Common myeloid progenitor, CD34-positive (primary cell): ENCODE measurements at regions of chr11 and their contacts with region 1.

Region 1: GRCh38 chr11:58629857-58630256 is 7.4 kb downstream of the CNTF start:
- DNase-seq: peak; percentile 65 to 82 (median 82)
- H3K4me3 ChIP-seq: no peak overlapping the region
- H3K27ac ChIP-seq: no peak overlapping the region
- H3K4me1 ChIP-seq: peaks cover 0 to 7% (median 1%) of the 10 kb centered on the region in 4 experiments
- H3K27me3 ChIP-seq: no peaks in the 10 kb centered on the region

Region 2: GRCh38 chr11:58471892-58472291 is 158.0 kb before region 1 on chr11:
- CTCF ChIA-PET with region 1: no interaction called
- POLR2A ChIA-PET with region 1: no interaction called
- DNase-seq: peak in 2 of 3 donors; percentile 8 to 13
- H3K4me3 ChIP-seq: no peak overlapping the region
- H3K27ac ChIP-seq: no peak overlapping the region
- H3K4me1 ChIP-seq: no peaks in the 10 kb centered on the region
- H3K27me3 ChIP-seq: no peaks in the 10 kb centered on the region

Region 3: GRCh38 chr11:58567889-58568512 is 61.9 kb before region 1 on chr11:
- CTCF ChIA-PET with region 1: interaction called, 45 read pairs
- POLR2A ChIA-PET with region 1: no interaction called
- DNase-seq: peak; percentile 79 to 91 (median 87)
- H3K4me3 ChIP-seq: no peak overlapping the region
- H3K27ac ChIP-seq: no peak overlapping the region
- H3K4me1 ChIP-seq: peaks cover 8 to 46% (median 28%) of the 10 kb centered on the region in 4 experiments
- H3K27me3 ChIP-seq: no peaks in the 10 kb centered on the region

Region 4: DNA sequence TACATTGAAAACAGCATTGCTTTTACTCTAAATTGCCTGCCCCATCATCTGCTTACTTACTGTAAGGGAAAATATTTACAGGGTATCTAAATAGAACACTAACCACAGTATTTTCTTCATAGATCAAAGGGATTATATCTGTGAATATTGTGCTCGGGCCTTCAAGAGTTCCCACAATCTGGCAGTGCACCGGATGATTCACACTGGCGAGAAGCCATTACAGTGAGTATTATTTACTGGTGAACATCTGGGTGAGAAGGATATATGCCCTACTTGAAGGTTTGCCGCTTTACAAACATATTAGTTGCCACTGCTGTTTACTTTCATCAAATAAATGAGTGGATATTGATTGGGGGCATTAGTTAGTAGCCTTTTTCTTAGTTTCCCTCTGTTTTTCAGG is 13.3 kb before region 1 on chr11:
- CTCF ChIA-PET with region 1: interaction called, 27 read pairs
- POLR2A ChIA-PET with region 1: no interaction called
- DNase-seq: no peak
- H3K4me3 ChIP-seq: no peak overlapping the region
- H3K27ac ChIP-seq: no peak overlapping the region
- H3K4me1 ChIP-seq: no peaks in the 10 kb centered on the region
- H3K27me3 ChIP-seq: no peaks in the 10 kb centered on the region

Region 5: GRCh38 chr11:58647141-58647699 is 17.4 kb after region 1 on chr11:
- CTCF ChIA-PET with region 1: interaction called, 12 read pairs
- POLR2A ChIA-PET with region 1: no interaction called
- DNase-seq: no peak
- H3K4me3 ChIP-seq: no peak overlapping the region
- H3K27ac ChIP-seq: no peak overlapping the region
- H3K4me1 ChIP-seq: peaks cover 0 to 4% (median 0%) of the 10 kb centered on the region in 4 experiments
- H3K27me3 ChIP-seq: no peaks in the 10 kb centered on the region